Breast epithelium (tissue), 4 donors: ENCODE measurements at regions of chr1 and their contacts with region 1.

Region 1: DNA sequence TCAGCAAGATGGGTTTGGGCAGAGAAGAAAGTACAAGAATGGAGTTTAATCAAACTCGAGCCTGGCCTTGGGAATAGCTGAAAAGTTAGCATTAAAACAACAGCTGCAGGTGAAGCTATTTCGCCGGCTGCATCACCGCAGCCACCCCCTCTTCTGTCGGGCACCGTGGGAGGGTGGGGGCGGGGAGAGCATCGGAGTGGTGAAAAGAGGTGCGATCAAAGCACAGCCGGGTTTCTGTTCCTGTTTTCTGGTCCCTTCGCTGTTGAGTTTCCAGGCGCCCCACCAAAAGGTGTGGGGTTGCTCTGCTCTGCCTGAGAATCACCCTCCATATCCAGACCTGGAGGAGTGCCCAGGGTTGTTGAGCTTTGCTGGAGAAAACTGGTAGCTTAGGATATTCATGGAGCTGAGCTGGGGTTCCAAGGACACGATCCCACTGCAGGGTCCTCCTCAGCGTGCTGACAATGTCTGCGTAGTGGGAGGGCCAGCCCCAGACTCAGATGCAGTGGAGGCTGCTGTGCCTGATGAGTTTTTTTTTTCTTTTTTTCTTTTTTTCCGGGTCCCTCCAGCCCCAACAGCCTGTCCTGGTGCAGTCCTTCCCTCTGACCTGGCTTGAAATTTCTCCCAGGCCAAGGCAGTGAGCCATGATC is 127.5 kb upstream of the C1orf174 start:
- DNase-seq: no peak
- H3K4me3 ChIP-seq: no peak overlapping the region
- H3K27ac ChIP-seq: no peak overlapping the region
- H3K4me1 ChIP-seq: no peaks in the 10 kb centered on the region
- H3K27me3 ChIP-seq: peaks cover 0 to 5% of the 10 kb centered on the region in 2 donors
- CTCF ChIP-seq: no peak
- POLR2A ChIP-seq: no peak

Region 2: DNA sequence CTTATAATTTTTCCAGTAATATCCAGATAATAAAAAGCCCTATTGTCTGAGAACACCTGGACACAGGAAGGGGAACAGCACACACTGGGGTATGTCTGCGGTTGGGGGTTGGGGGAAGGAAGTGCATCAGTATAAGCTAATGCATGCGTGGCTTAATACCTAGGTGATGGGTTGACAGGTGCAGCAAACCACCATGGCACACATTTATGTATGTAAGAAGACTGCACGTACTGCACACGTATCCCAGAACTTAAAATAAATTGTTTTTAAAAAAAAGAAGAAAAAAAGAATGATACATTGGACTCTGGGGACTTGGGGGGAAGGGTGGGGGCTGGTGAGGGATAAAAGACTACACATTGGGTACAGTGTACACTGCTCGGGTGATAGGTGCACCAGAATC is 17.4 kb after region 1 on chr1:
- intact Hi-C with region 1: loop called (anchors 1 kb)
- DNase-seq: no peak
- H3K4me3 ChIP-seq: no peak overlapping the region
- H3K27ac ChIP-seq: no peak overlapping the region
- H3K4me1 ChIP-seq: no peaks in the 10 kb centered on the region
- H3K27me3 ChIP-seq: peaks cover 0 to 24% of the 10 kb centered on the region in 2 donors
- CTCF ChIP-seq: no peak
- POLR2A ChIP-seq: no peak

Region 3: GRCh38 chr1:4060850-4061249 is 33.2 kb after region 1 on chr1:
- intact Hi-C with region 1: no loop called
- DNase-seq: no peak
- H3K4me3 ChIP-seq: no peak overlapping the region
- H3K27ac ChIP-seq: no peak overlapping the region
- H3K4me1 ChIP-seq: no peaks in the 10 kb centered on the region
- H3K27me3 ChIP-seq: no peaks in the 10 kb centered on the region
- CTCF ChIP-seq: no peak
- POLR2A ChIP-seq: no peak